ENCODE measurements at regions of chr16 and their contacts with region 1.

Region 1: GRCh38 chr16:89167425-89167941 is 4.1 kb upstream of the CDH15 start:
- DNase-seq: peak; percentile 92
- H3K4me3 ChIP-seq: no peak overlapping the region
- H3K27ac ChIP-seq: no peak overlapping the region
- H3K4me1 ChIP-seq: peaks cover 8% of the 10 kb centered on the region
- H3K27me3 ChIP-seq: peaks cover 21% of the 10 kb centered on the region
- CTCF ChIP-seq: peak; percentile 84

Region 2: DNA sequence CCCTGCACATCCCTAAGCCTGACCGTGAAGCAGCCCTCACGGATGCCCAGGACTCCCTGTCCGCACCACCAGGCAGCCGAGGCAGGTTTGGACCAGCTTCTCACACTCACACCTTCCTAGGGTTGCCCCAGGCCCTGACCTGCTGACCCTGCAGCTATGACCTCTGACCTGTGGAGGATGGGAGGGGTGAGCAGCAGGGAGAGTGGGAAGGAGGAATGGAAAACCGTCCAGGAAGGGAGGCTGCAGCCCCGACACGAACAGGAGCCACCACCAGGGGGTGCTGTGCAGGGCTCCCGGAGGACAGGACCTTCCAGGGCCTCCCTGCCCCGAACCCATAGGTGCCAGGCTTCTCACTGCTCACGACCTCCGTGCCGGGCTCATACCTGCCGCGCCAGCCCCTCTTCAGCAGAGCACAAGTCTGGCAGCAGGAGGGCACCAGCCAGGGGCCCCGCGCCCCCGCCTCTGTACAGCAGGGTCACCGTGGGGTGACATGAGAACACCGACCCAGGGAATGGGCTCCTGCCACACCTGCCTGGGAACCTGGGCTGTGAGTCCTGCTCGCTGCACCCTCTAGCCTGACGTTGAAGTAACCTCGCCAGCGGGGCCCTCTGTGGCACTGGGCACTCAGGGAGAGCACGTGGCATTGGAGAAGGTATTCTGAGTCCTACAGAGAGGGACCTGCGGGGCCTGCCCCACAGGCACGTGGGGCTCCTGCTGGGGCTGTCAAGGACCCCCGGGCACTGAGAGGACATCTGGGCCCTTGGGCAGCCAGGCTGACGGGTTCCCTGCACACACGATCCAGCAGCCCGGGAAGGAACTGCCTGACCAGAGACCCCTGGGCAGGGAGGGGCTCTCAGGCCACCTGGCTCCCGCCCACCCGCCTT is 423.5 kb before region 1 on chr16:
- intact Hi-C with region 1: loop called (anchors 10 kb)
- DNase-seq: peak; percentile 88
- H3K4me3 ChIP-seq: no peak overlapping the region
- H3K27ac ChIP-seq: no peak overlapping the region
- H3K4me1 ChIP-seq: peaks cover 9% of the 10 kb centered on the region
- H3K27me3 ChIP-seq: no peaks in the 10 kb centered on the region
- CTCF ChIP-seq: peak; percentile 93

Region 3: DNA sequence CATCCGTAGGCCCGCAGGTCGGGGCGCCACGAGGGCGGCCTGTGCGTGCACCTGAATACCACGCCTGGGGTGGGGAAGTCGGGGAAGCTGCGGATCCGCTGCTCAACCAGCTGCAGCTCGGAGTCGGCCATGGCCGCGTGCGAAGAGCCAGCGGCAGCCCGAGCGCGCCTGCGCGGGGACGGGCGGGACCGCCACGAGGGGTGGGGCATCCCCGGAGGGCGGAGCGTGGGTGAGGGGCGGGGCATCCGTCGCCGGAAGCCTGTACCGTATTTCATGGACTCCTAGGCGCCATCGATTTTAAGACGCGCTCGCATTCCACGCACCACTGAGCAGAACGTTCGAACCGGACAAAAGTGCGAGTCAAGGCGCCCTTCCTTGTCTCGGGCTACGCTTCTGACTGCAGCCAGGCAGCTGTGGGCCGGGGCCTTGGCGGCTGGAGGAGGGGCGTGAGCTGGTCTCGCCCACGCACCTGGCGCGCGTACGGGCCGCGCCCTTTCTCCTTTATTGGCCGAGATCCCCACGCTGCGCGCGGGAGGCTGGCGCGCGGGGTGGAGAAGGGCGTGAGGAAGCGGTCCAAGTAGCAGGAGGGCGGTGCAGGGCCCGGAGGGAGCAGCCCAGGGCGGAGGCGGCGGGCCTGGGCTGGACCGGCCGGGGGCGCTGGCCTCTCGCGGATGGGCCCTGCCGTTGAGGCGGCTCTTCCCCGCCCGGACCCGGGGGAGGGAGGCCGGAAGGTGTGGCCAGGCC is 355.5 kb before region 1 on chr16 and contains the start of gene APRT:
- intact Hi-C with region 1: loop called (anchors 2 kb)
- DNase-seq: peak; percentile 96
- H3K4me3 ChIP-seq: peak within 1 kb of the TSS; percentile 75
- H3K27ac ChIP-seq: peak within 1 kb of the TSS; percentile 96
- H3K4me1 ChIP-seq: peaks cover 11% of the 10 kb centered on the region
- H3K27me3 ChIP-seq: no peaks in the 10 kb centered on the region
- CTCF ChIP-seq: no peak
- total RNA-seq, gene APRT: 103 to 273 TPM

Region 4: DNA sequence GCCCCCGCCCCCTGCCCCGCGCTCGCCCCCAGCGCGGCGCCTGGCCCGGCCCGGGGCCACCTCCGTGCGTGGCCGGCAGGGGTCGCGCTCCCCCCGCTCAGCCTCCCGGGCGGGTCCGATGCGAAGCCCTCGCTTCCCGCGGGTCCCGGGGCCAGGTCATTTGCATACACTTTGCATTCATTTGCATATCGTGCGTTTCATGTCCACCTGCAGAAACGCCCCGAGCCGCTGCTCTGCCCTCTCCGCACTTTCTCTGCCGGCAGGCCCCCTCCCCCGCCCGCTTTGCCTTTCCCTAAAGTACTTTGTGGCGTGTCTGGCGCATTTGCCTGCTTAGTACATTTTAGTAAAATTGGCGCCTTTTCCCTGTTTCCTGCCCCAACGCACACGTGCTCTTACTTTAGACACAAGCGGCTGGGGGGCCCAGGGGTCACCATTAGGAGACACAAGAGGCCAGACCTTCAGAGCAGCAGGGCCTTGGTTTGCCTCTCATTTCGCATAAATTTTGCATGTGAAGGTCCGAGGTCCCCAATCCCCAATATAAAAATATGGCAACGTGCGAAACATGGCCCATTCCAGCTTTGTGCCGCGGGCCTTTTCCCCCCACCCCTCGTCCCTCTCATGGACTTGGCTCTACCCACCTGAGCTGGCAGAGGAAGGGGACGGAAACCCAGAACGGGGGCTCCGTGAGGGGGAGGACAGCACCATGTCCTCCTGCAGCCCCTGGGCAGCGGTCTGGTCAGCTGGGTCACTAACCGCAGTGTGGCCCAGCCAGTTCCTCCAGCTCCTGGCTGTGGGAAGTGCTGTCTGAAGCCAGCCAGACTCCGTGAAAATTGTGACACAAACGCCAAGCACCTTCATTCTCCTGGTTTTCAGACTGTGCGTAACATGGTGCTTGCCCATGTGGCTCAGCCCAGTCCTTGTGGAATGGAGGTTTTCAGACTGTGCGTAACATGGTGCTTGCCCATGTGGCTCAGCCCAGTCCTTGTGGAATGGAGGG is 225.3 kb before region 1 on chr16:
- intact Hi-C with region 1: loop called (anchors 5 kb)
- DNase-seq: peak; percentile 47
- H3K4me3 ChIP-seq: peak overlapping the region; percentile 17
- H3K27ac ChIP-seq: no peak overlapping the region
- H3K4me1 ChIP-seq: peaks cover under 1% of the 10 kb centered on the region
- H3K27me3 ChIP-seq: peaks cover 26% of the 10 kb centered on the region
- CTCF ChIP-seq: peak; percentile 38

Region 5: DNA sequence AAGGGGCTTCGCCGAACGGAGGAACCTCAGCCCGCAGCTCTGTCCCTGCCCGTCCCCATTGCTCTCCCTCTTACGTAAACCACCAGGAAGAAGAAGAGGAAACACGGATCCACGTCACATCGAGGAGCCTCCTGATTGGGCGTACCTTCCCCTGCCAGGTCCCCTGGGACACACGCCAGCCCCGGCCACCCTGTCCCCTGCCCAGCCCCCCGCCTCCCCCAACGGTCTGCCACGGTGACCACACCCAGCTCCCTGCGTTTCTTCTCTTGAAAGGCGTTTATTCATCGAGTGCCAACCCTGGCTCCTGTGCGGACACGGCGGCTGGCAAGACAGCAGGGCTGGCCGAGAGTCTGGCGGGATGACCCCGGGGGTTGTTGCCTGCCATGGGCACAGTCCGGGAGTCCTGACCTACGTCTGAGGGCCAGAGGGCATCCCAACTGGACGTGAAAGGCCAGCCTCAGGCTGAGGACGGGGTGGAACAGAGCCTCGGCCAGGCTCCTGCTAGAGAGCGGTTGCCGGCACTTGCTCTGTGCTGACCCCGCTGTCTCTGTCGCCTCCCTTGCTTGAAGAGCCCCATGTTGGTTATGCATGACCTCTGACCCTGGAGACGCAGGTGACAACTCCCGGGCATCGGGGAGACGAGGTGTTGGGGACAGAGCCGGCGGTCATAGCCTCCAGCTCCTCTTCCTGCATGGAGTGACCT is 114.4 kb before region 1 on chr16:
- intact Hi-C with region 1: loop called (anchors 10 kb)
- DNase-seq: peak; percentile 68
- H3K4me3 ChIP-seq: peak overlapping the region; percentile 40
- H3K27ac ChIP-seq: peak overlapping the region; percentile 66
- H3K4me1 ChIP-seq: no peaks in the 10 kb centered on the region
- H3K27me3 ChIP-seq: no peaks in the 10 kb centered on the region
- CTCF ChIP-seq: no peak

Region 6: DNA sequence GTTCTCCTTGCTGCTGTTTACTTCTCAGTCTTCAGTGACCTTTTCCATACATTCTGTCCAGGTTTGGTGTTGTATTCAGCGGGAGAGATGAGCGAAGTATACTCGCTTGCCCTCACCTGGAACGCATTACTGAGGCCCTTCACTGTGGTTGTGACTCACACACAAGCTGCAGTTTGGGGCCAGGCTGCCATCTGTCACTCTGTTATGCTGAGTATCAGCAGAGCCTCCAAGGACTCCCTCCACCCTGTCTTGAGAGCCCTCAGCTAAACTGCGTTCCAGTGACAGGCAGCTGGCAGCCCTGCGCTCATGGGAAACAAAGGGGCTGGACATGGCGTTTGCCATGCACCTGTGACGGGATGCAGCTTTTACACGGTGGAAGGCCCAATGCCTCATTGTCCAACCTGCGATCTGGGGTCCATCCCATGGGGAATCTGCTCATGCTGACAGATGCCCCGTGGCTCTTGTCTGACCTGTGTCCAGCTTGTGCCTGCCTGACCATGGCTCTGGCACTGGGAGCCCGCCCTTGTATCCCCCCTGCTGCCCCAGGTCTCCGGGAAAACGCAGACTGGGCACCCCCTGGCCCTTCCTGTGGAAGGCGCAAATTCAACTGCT is 43.5 kb after region 1 on chr16:
- intact Hi-C with region 1: no loop called
- DNase-seq: no peak
- H3K4me3 ChIP-seq: no peak overlapping the region
- H3K27ac ChIP-seq: no peak overlapping the region
- H3K4me1 ChIP-seq: no peaks in the 10 kb centered on the region
- H3K27me3 ChIP-seq: no peaks in the 10 kb centered on the region
- CTCF ChIP-seq: no peak